ENCODE measurements at regions of chr10 and their contacts with region 1.

Region 1: GRCh38 chr10:89625041-89625765 is 19.8 kb downstream of the PANK1 start:
- DNase-seq: no peak
- ATAC-seq: no peak
- H3K4me3 ChIP-seq: no peak overlapping the region
- H3K4me3 Mint-ChIP-seq: no peak overlapping the region
- H3K27ac ChIP-seq: no peak overlapping the region
- H3K27ac Mint-ChIP-seq: no peak overlapping the region
- H3K4me1 ChIP-seq: no peaks in the 10 kb centered on the region
- H3K4me1 Mint-ChIP-seq: no peaks in the 10 kb centered on the region
- H3K27me3 ChIP-seq: no peaks in the 10 kb centered on the region
- H3K27me3 Mint-ChIP-seq: no peaks in the 10 kb centered on the region
- CTCF ChIP-seq: no peak

Region 2: GRCh38 chr10:88278912-88279311 is 1346.3 kb before region 1 on chr10:
- CTCF ChIA-PET with region 1: no interaction called
- POLR2A ChIA-PET with region 1: no interaction called
- intact Hi-C with region 1: loop called in 1 of 2 experiments (anchors 5 kb)
- DNase-seq: peak in 2 of 9 experiments; percentile 7 to 19
- ATAC-seq: no peak
- H3K4me3 ChIP-seq: no peak overlapping the region
- H3K4me3 Mint-ChIP-seq: no peak overlapping the region
- H3K27ac ChIP-seq: no peak overlapping the region
- H3K27ac Mint-ChIP-seq: peak overlapping the region; percentile 19
- H3K4me1 ChIP-seq: peaks cover 13% of the 10 kb centered on the region
- H3K4me1 Mint-ChIP-seq: peaks cover 36% of the 10 kb centered on the region
- H3K27me3 ChIP-seq: no peaks in the 10 kb centered on the region
- H3K27me3 Mint-ChIP-seq: no peaks in the 10 kb centered on the region
- CTCF ChIP-seq: no peak

Region 3: GRCh38 chr10:91210435-91210834 is 1585.2 kb after region 1 on chr10:
- CTCF ChIA-PET with region 1: no interaction called
- POLR2A ChIA-PET with region 1: no interaction called
- intact Hi-C with region 1: no loop called
- DNase-seq: peak in 4 of 9 experiments; percentile 44 to 74 (median 50)
- ATAC-seq: peak; percentile 28
- H3K4me3 ChIP-seq: no peak overlapping the region
- H3K4me3 Mint-ChIP-seq: no peak overlapping the region
- H3K27ac ChIP-seq: no peak overlapping the region
- H3K27ac Mint-ChIP-seq: peak overlapping the region; percentile 30
- H3K4me1 ChIP-seq: peaks cover 33% of the 10 kb centered on the region
- H3K4me1 Mint-ChIP-seq: peaks cover 69% of the 10 kb centered on the region
- H3K27me3 ChIP-seq: no peaks in the 10 kb centered on the region
- H3K27me3 Mint-ChIP-seq: no peaks in the 10 kb centered on the region
- CTCF ChIP-seq: no peak